Ovary (tissue), 10 donors: ENCODE measurements at regions of chr15 and their contacts with region 1.

Region 1: GRCh38 chr15:67065444-67066093 is at the start of gene SMAD3:
- DNase-seq: peak; percentile 88 to 91 (median 90)
- H3K4me3 ChIP-seq: peak within 1 kb of the TSS; percentile 76
- H3K27ac ChIP-seq: peak within 1 kb of the TSS; percentile 90 to 93
- H3K4me1 ChIP-seq: peaks cover 22% of the 10 kb centered on the region
- H3K27me3 ChIP-seq: no peaks in the 10 kb centered on the region
- CTCF ChIP-seq: no peak
- EP300 ChIP-seq: no peak
- POLR2A ChIP-seq: peak; percentile 54
- total RNA-seq, gene SMAD3: 21.6 to 78.6 (median 46.0) TPM

Region 2: DNA sequence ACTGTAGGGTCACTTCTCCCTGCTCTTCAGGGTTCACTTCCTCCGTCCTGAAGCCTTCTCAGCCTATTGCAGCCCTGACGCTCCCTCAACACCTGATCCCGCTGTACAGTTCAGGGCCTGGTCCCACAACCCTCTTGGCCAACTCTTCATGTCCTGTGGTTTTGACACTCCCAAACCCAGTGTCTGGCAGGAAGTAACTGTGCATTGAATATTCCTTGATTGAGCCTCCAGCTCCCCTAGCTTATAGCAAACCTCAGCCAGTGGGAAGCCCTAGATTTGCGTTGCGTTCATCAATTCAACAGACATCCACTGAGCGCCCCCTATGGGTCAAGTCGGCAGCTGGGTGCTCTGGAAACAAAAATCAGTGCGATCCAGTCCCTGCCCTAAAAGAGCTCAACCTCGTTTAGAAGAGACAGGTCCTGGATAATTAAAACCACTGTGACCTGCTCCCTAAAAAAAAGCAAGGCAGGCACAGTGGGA is 1964.1 kb before region 1 on chr15:
- intact Hi-C with region 1: no loop called
- DNase-seq: peak; percentile 41 to 72 (median 69)
- H3K4me3 ChIP-seq: no peak overlapping the region
- H3K27ac ChIP-seq: no peak overlapping the region
- H3K4me1 ChIP-seq: no peaks in the 10 kb centered on the region
- H3K27me3 ChIP-seq: no peaks in the 10 kb centered on the region
- CTCF ChIP-seq: peak; percentile 32 to 53 (median 33)
- EP300 ChIP-seq: no peak
- POLR2A ChIP-seq: no peak

Region 3: DNA sequence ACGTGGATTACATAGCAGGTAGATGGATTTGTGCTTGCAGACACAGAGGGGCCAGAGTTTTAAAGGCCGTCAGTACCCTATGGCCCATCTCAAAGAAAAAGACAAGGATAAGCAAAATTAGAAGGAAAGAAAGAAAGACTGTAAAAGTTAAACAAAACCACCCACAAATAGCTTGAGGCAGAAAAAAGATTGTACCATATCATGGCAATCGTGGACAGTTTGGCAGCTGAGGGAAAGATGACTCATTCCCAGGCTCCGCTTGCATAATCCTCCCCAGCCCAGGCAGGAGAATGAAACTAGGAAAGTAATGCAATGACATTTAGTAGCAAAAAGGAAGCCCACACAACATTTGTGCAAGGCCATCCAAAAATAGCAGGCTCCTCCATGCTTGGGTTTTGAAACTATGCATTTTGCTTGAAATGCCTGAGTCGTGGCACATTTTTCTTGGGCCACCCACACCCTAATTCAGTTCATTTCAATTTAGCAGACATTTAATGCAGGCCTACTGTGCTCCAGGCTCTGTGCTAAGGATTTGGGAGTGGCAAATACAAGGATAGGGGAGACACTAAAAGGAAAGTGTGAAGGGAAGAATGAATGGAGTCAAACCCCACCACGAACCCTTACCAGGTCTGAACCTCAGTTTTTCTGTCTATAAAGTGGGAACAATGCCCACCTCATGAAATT is 41.1 kb before region 1 on chr15:
- intact Hi-C with region 1: loop called in 1 of 4 experiments (anchors 5 kb)
- DNase-seq: peak; percentile 72 to 87 (median 77)
- H3K4me3 ChIP-seq: no peak overlapping the region
- H3K27ac ChIP-seq: peak overlapping the region in 1 of 2 donors; percentile 26
- H3K4me1 ChIP-seq: peaks cover 19% of the 10 kb centered on the region
- H3K27me3 ChIP-seq: no peaks in the 10 kb centered on the region
- CTCF ChIP-seq: no peak
- EP300 ChIP-seq: no peak
- POLR2A ChIP-seq: no peak

Region 4: DNA sequence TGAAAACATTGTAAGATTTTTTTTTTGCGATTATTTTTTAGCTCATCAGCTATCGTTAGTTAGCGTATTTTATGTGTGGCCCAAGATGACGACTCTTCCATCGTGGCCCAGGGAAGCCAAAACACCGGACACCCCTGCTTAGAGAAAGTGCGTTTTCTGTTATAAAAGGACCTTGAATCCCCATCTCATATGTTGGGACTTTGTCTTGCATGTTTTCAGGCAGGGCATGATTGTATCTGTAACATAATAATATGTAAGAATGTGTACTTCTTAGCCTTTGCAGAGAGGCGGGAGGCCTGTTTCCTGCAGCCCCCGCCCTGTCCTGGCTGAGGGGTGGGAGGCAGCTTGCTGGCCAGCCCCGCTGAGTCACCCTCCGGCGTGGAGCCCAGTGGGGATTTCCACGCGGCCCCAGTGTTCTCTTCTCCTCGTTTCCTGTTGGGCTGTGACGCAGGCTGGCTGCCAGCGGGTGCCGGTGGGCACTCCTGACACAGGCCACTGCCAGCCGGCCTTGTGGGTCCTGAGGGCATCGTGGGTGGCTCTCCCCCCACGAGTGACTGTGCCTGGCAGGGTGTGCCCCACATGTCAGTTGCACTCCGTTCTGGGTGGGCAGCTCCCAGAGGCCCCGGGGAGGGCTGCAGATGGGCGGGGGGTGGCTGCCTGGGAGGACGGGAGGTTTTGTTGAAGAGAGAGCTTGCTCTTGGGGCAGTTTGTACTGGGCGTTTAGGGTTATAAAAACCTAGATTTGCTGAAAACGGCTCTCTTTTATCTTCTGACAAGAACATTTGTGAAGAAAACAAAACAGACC is 55.5 kb after region 1 on chr15:
- intact Hi-C with region 1: loop called in 2 of 4 experiments (anchors 10 kb)
- DNase-seq: peak; percentile 91 to 94 (median 92)
- H3K4me3 ChIP-seq: peak overlapping the region; percentile 31
- H3K27ac ChIP-seq: peak overlapping the region; percentile 92
- H3K4me1 ChIP-seq: peaks cover 48% of the 10 kb centered on the region
- H3K27me3 ChIP-seq: no peaks in the 10 kb centered on the region
- CTCF ChIP-seq: no peak
- EP300 ChIP-seq: no peak
- POLR2A ChIP-seq: peak; percentile 59

Region 5: DNA sequence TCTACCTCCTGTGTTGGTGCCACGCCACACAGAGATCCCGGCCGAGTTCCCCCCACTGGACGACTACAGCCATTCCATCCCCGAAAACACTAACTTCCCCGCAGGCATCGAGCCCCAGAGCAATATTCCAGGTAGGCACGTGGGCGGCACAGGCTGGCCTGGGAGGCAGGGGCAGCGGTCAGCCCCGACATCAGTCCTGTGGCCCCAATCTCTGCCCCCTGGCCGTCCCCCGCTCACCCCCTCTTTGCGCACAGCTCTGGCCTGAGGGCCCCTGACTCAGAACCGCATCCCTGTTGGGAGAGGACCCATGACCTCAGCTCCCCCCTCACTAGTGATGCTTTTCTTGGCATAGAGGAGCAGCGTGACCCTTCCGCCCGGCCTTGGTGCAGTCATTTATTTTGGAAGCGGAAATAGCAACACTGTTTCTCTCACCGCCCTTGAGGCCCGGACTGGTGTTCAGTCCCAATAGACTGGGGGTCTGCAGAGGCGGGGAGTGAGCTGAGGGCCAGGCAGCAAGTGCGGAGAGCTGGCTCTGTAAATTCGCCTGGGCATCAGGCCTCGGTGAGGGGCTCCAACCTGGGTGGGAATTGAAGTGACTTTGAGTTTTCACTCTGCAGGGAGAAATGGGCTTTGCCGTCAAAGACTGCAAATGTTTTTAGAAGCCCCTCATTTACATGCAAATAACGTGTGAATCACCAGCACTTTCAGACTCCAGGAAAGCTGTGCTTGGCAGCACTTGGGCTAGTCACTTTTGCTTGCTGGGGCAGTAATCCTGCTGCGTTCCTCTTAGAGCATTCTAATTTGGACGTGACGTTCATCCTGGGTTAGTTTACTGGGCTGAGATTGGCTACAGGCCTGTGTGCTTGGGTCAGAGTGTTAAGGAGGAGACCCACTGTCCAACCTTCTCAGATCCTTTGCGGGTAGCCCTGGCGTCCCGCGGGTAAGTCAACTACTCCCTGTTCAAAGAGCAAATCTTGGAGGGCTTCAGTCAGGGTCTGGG is 100.0 kb after region 1 on chr15:
- intact Hi-C with region 1: loop called in 1 of 4 experiments (anchors 10 kb)
- DNase-seq: peak; percentile 62 to 81 (median 73)
- H3K4me3 ChIP-seq: no peak overlapping the region
- H3K27ac ChIP-seq: peak overlapping the region; percentile 48 to 69
- H3K4me1 ChIP-seq: peaks cover 40% of the 10 kb centered on the region
- H3K27me3 ChIP-seq: no peaks in the 10 kb centered on the region
- CTCF ChIP-seq: no peak
- EP300 ChIP-seq: no peak
- POLR2A ChIP-seq: no peak

Region 6: DNA sequence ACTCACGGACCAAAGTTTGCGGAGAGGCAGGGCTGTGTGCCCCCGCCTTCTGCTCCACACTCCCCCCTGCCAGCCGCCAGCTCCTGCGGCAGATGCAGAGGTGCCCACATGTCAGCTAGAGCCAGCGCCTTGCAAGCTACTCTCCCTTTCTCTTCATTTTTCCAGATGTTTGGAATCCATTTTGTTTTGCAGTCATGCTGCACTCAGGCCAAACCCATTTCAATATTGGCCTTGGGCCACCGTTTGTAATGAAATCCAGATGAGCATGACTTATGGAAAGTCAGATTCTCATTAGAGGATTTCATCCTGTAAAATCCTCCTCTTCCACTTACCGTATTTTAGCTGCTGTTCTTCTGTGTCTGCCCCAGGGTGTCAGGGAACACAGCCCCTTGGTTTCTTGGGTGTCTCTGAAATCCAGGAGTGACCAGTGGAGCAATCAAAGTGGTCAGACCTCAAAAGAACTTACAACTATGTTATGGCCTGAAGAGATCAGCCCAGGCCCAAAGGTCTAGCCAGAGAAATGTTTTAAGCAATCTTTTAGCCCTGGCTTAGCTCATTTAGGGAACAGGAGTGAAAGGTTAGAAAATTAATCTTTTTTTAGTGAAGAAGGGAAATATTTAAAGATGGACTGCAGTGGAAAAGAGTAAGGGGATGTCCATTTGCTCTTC is 123.1 kb after region 1 on chr15:
- intact Hi-C with region 1: loop called in 1 of 4 experiments (anchors 10 kb)
- DNase-seq: peak in 3 of 5 donors; percentile 63 to 86 (median 74)
- H3K4me3 ChIP-seq: no peak overlapping the region
- H3K27ac ChIP-seq: peak overlapping the region; percentile 66 to 81
- H3K4me1 ChIP-seq: peaks cover 28% of the 10 kb centered on the region
- H3K27me3 ChIP-seq: no peaks in the 10 kb centered on the region
- CTCF ChIP-seq: no peak
- EP300 ChIP-seq: no peak
- POLR2A ChIP-seq: no peak

Region 7: GRCh38 chr15:67254238-67255175 is 188.9 kb after region 1 on chr15 and contains the starts of genes AAGAB and IQCH:
- intact Hi-C with region 1: loop called in 1 of 4 experiments (anchors 10 kb)
- DNase-seq: peak; percentile 97 to 99 (median 98)
- H3K4me3 ChIP-seq: peak within 1 kb of the TSS; percentile 81
- H3K27ac ChIP-seq: peak within 1 kb of the TSS; percentile 10 to 25
- H3K4me1 ChIP-seq: peaks cover 5% of the 10 kb centered on the region
- H3K27me3 ChIP-seq: no peaks in the 10 kb centered on the region
- CTCF ChIP-seq: peak in 2 of 3 donors; percentile 27 to 52
- EP300 ChIP-seq: no peak
- POLR2A ChIP-seq: peak; percentile 44
- total RNA-seq, gene AAGAB: 17.8 to 37.1 (median 22.8) TPM
- total RNA-seq, gene IQCH: 0.56 to 10.0 (median 0.95) TPM